OCI-LY7 (cell line): ENCODE measurements at regions of chr12 and their contacts with region 1.

Region 1: GRCh38 chr12:120625557-120626419 is 14.6 kb upstream of the CABP1 start:
- DNase-seq: peak; percentile 73
- H3K4me3 ChIP-seq: no peak overlapping the region
- H3K27ac ChIP-seq: no peak overlapping the region
- H3K4me1 ChIP-seq: peaks cover 5% of the 10 kb centered on the region
- CTCF ChIP-seq: peak; percentile 75

Region 2: DNA sequence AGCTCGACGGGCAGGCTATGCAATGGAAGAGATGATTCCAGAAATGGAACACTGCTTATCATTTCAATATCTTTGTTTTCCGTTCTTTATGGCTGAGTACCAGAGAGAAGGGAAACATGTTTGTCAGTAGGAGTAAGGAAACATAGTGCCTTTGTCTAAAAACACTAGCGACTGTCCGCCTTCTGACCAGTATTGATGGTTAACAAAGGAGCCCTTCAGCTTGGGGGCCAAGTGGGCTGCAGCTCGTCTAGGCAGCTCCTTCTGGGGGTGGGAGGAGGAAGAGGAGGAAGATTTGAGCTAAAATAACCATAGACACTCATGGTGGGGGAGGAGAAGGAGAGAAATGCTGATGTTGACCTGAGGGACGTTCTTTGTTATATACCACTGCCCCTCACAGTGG is 111.8 kb before region 1 on chr12:
- CTCF ChIA-PET with region 1: no interaction called
- POLR2A ChIA-PET with region 1: no interaction called
- intact Hi-C with region 1: no loop called
- DNase-seq: no peak
- H3K4me3 ChIP-seq: no peak overlapping the region
- H3K27ac ChIP-seq: no peak overlapping the region
- H3K4me1 ChIP-seq: no peaks in the 10 kb centered on the region
- CTCF ChIP-seq: no peak

Region 3: DNA sequence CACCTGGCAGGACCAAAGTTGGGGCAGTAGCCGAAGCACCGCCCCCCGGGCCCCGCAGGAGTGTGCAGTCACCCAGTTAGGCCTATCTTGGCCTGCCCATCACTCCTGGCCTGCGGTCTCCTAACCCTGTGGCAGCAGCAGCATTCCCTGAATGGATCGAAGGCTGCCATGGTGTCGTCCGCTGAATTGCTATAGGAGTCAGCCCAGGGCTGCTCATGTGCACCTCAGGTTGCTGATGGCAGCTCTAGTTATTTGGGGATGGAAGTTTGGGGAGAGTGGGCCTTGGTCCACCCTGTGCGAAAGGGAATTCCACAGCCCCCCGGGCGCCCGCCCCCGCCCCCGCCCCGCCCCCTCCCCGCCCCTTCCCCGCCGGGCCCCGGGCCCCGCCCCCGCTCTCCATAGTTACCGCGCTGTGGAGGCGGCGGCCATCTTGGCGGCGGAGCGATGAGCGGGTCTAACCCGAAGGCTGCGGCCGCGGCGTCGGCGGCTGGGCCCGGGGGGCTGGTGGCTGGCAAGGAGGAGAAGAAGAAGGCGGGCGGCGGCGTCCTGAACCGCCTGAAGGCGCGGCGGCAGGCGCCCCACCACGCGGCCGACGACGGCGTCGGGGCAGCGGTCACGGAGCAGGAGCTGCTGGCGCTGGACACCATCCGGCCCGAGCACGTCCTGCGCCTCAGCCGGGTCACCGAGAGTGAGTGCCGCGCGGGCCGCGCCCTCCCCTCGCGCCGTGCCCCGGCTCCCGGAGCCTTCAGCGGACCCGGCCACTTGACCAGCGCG is 84.4 kb after region 1 on chr12 and contains the start of gene UNC119B:
- CTCF ChIA-PET with region 1: no interaction called
- POLR2A ChIA-PET with region 1: interaction called, 3 read pairs
- intact Hi-C with region 1: loop called (anchors 5 kb)
- DNase-seq: peak; percentile 72
- H3K4me3 ChIP-seq: peak within 1 kb of the TSS; percentile 98
- H3K27ac ChIP-seq: peak within 1 kb of the TSS; percentile 46
- H3K4me1 ChIP-seq: peaks cover 37% of the 10 kb centered on the region
- CTCF ChIP-seq: no peak
- total RNA-seq, gene UNC119B: 16.5 and 17.2 TPM in 2 replicates